ENCODE measurements at regions of chr5 and their contacts with region 1.

Region 1: DNA sequence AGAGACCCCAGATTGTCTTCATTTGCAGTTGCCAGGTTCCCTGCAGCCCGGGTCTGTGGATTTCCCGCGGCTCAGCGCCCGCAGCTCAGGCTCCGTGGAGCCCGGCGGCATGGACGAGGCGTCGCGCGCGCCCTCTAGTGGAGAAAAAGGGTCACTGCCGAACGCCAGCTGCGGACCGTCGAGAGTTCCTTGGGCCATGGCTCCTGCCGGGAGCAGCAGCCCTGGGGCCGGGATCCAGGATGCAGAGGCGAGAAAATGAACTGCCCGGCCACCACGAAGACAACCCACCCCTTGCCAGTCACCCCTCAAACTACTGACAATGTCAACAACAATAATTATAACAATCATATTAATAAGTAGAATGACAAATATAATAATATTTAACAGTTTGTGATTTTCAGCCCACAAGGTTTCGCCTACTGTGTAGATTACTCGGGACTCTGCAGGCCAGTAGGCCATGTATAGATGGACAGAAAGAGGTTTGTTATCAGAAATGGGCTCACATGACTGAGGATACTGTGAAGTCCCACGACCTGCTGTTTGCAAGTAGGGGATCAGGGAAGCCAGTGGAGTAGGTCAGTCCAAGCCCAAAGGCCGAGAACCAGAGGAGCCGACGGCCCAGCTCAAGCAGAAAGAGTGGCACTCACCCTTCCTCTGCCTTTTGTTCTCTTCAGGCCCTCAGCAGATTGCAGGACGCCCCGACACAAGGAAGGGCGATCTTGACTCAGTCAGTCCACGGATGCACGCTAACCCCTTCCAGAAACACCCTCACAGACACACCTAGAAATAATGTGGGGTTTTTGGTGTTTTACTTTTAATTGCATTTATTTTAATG is 43.1 kb downstream of the BOD1 start:
- DNase-seq: peak; percentile 75
- H3K4me3 Mint-ChIP-seq: peak overlapping the region; percentile 7
- H3K27ac Mint-ChIP-seq: no peak overlapping the region
- H3K4me1 Mint-ChIP-seq: peaks cover 12% of the 10 kb centered on the region
- H3K27me3 Mint-ChIP-seq: no peaks in the 10 kb centered on the region
- CTCF ChIP-seq: peak; percentile 99

Region 2: GRCh38 chr5:172973127-172973916 is 600.0 kb before region 1 on chr5:
- CTCF ChIA-PET with region 1: no interaction called
- POLR2A ChIA-PET with region 1: no interaction called
- intact Hi-C with region 1: loop called (anchors 10 kb)
- DNase-seq: no peak
- H3K4me3 Mint-ChIP-seq: no peak overlapping the region
- H3K27ac Mint-ChIP-seq: no peak overlapping the region
- H3K4me1 Mint-ChIP-seq: no peaks in the 10 kb centered on the region
- H3K27me3 Mint-ChIP-seq: no peaks in the 10 kb centered on the region
- CTCF ChIP-seq: no peak

Region 3: GRCh38 chr5:173282916-173283315 is 290.4 kb before region 1 on chr5:
- CTCF ChIA-PET with region 1: no interaction called
- POLR2A ChIA-PET with region 1: no interaction called
- intact Hi-C with region 1: no loop called
- DNase-seq: no peak
- H3K4me3 Mint-ChIP-seq: peak overlapping the region; percentile 49
- H3K27ac Mint-ChIP-seq: no peak overlapping the region
- H3K4me1 Mint-ChIP-seq: peaks cover 6% of the 10 kb centered on the region
- H3K27me3 Mint-ChIP-seq: no peaks in the 10 kb centered on the region
- CTCF ChIP-seq: no peak

Region 4: DNA sequence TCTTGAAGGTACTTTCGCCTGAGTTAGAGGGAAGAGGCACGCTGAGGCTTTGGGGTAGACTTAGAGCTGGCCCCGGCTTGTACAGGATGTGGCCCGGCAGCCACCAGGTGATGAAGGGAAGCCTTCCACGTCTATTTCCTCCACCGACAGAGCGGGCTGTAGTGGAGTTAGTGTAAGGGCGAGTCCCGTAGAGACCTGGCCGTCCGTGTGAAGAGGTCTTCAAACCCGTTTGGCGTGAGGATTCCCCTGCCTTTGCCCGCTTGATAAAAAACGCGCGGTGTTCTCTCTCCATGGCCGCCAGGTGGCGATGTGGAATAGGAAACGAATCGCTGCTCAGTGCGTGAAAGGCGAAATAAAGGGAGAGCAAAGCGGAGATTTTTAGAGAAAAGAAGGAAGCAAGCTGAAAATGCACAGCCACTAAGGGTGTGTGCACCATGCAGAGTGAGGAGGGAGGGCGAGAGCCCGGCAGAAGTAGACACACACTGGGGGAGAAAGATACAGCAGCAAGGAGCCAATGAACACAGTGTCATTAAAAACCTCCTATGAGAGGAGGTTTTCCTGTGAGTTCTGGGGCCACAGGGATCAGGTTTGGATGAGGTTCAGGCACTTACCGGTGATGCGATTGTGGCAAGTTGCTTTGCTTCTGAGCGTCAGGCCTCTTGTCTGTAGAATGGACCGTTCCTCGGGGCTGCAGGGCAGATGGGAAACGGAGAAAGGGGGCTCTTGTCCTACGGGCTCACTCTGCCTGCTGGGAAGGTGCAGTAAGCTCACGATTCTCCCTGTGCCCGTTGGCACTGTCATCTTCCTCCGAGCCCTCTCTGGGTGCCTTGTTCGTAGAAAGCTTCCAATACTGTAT is 279.3 kb before region 1 on chr5:
- CTCF ChIA-PET with region 1: interaction called, 184 read pairs
- POLR2A ChIA-PET with region 1: interaction called, 16 read pairs
- intact Hi-C with region 1: loop called (anchors 1 kb)
- DNase-seq: peak; percentile 94
- H3K4me3 Mint-ChIP-seq: peak overlapping the region; percentile 9
- H3K27ac Mint-ChIP-seq: peak overlapping the region; percentile 24
- H3K4me1 Mint-ChIP-seq: peaks cover 21% of the 10 kb centered on the region
- H3K27me3 Mint-ChIP-seq: no peaks in the 10 kb centered on the region
- CTCF ChIP-seq: peak; percentile 93

Region 5: GRCh38 chr5:173315495-173316350 is 257.6 kb before region 1 on chr5:
- CTCF ChIA-PET with region 1: interaction called, 6 read pairs
- POLR2A ChIA-PET with region 1: interaction called, 5 read pairs
- intact Hi-C with region 1: loop called (anchors 5 kb)
- DNase-seq: peak; percentile 43
- H3K4me3 Mint-ChIP-seq: no peak overlapping the region
- H3K27ac Mint-ChIP-seq: peak overlapping the region; percentile 10
- H3K4me1 Mint-ChIP-seq: peaks cover 17% of the 10 kb centered on the region
- H3K27me3 Mint-ChIP-seq: no peaks in the 10 kb centered on the region
- CTCF ChIP-seq: no peak

Region 6: DNA sequence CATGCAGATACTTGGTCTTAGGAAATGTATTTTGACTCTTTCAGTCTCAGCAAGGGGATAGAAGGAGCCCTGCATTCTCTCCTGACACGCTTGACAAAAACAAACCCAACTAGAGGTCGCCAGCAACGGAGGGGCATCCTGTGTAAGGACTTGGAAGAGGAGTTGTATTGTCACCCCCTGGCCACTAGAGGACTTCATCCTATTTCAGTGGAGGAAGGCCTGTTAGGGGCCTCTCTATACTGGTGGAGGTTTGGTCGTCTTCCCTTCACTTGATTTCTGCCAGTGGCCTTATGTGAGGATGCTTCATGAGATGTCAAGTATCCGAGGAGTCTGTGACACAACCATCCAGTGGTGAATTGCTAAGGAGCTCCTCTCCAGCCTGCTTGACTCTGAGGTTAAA is 122.3 kb before region 1 on chr5:
- CTCF ChIA-PET with region 1: interaction called, 4 read pairs
- POLR2A ChIA-PET with region 1: interaction called, 9 read pairs
- intact Hi-C with region 1: loop called (anchors 2 kb)
- DNase-seq: peak; percentile 34
- H3K4me3 Mint-ChIP-seq: no peak overlapping the region
- H3K27ac Mint-ChIP-seq: no peak overlapping the region
- H3K4me1 Mint-ChIP-seq: peaks cover 46% of the 10 kb centered on the region
- H3K27me3 Mint-ChIP-seq: no peaks in the 10 kb centered on the region
- CTCF ChIP-seq: peak; percentile 36

Region 7: GRCh38 chr5:173592050-173592669 is 18.8 kb after region 1 on chr5:
- CTCF ChIA-PET with region 1: interaction called, 10 read pairs
- POLR2A ChIA-PET with region 1: no interaction called
- intact Hi-C with region 1: no loop called
- DNase-seq: peak; percentile 43
- H3K4me3 Mint-ChIP-seq: no peak overlapping the region
- H3K27ac Mint-ChIP-seq: no peak overlapping the region
- H3K4me1 Mint-ChIP-seq: no peaks in the 10 kb centered on the region
- H3K27me3 Mint-ChIP-seq: peaks cover 17% of the 10 kb centered on the region
- CTCF ChIP-seq: peak; percentile 65